Astrocyte of the cerebellum (primary cell): ENCODE measurements at regions of chr1 and their contacts with region 1.

Region 1: GRCh38 chr1:178774263-178774662 is 49.2 kb downstream of the RALGPS2 start:
- DNase-seq: peak; percentile 24
- H3K4me3 ChIP-seq: no peak overlapping the region
- CTCF ChIP-seq: no peak

Region 2: DNA sequence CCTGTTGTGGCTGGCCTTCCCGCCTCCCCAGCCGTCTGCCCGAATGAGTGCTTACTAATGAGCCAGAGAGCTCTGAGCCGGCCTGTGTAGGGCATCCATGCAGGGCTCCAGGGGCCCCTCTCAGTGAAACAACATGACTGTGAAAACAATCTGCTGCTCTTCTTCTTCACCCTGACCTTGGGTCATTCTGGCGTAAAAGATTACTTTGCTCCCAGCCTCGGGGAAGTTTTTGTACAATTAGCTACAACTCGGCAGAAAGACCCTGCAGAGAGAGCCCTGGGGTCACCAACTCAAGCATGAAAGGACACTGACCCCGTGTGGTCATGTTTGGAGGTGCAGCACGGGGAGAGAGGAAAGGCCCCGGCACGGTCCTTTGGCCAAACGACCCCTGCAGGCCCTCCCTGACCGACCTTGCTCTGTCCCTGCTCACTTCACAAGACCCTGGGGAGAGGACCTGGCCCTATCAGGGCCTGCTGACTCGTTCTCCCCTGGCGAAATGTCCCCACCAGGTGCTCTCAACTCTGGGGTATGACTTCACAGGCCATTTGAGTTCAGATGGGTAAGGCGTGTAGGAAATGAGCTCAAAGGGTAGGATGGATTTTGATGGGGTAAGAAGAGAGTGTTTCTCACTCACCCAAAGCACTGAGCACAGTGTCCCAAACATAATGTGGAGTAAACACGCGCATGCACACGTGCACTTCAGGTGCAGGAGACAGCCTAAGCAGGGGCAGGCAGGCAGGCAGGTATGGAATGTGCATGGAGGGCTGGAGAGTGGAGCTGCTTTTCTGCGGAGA is 228.5 kb after region 1 on chr1:
- in situ Hi-C with region 1: loop called (anchors 10 kb)
- DNase-seq: peak; percentile 49
- H3K4me3 ChIP-seq: no peak overlapping the region
- CTCF ChIP-seq: peak; percentile 96